Body of pancreas (tissue), 4 donors: ENCODE measurements at regions of chr9 and their contacts with region 1.

Region 1: DNA sequence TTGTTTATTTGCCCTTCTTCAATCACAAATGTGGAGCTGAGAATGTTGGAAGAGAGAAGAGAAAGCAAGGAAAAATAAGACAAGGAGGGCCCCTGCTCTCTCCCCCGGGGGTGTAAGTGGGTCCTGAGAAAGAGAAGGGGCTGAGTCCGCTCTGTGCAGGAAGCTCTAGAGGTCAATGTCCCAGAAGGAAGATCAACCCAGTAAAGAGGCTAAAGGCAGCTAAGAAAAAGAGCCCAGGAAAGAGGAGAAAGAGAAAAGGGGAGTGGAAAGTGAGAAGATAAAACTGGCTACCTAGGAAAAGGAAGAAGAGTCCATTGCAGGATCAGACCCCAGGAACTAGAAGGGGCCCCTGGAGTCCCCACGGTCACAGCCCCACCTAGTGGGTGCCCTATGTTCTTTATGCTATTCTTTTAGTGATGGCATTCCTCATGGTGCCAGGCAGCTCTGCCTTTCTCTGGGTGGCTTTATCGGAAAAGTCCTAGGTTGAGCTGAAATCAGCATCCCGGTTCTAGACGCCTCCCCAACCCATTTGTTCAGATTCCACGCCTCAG is 583.4 kb downstream of the ACTL7B start:
- DNase-seq: peak; percentile 67 to 72 (median 68)
- ATAC-seq: peak; percentile 75
- H3K4me3 ChIP-seq: peak overlapping the region in 1 of 2 donors; percentile 19
- H3K27ac ChIP-seq: peak overlapping the region in 3 of 4 donors; percentile 64 to 81 (median 67)
- H3K4me1 ChIP-seq: peaks cover 16% of the 10 kb centered on the region
- H3K27me3 ChIP-seq: no peaks in the 10 kb centered on the region
- CTCF ChIP-seq: peak; percentile 52 to 78 (median 68)
- POLR2A ChIP-seq: no peak

Region 2: GRCh38 chr9:107489687-107490605 is 782.5 kb before region 1 on chr9 and contains the start of gene KLF4:
- intact Hi-C with region 1: loop called (anchors 10 kb)
- DNase-seq: peak; percentile 91 to 93 (median 92)
- ATAC-seq: peak; percentile 89
- H3K4me3 ChIP-seq: peak within 1 kb of the TSS; percentile 24 to 31
- H3K27ac ChIP-seq: peak within 1 kb of the TSS; percentile 65 to 75 (median 69)
- H3K4me1 ChIP-seq: peaks cover 53% of the 10 kb centered on the region
- H3K27me3 ChIP-seq: no peaks in the 10 kb centered on the region
- CTCF ChIP-seq: no peak
- POLR2A ChIP-seq: peak; percentile 83 to 87 (median 85)
- total RNA-seq, gene KLF4: 12.5 to 22.7 TPM

Region 3: DNA sequence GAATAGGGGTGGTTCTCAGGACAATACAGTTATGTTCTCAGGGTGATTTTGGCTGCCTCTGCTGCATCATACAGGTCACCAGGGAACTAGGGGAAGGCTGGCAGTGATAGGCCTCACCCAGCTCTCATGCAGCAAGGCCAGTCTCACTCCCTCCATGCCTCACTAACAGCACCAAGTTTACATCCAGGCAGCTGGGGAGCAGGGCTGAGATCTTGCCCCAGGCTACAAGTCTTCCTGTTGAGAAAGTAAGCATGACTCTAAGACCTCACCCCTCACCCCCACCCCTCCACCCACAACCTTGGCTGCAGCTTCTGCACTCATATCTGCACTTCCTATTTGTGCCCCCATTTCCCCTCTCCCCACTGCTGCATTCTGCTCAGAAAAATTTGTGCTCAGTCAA is 102.2 kb after region 1 on chr9:
- intact Hi-C with region 1: no loop called
- DNase-seq: no peak
- ATAC-seq: no peak
- H3K4me3 ChIP-seq: no peak overlapping the region
- H3K27ac ChIP-seq: no peak overlapping the region
- H3K4me1 ChIP-seq: no peaks in the 10 kb centered on the region
- H3K27me3 ChIP-seq: no peaks in the 10 kb centered on the region
- CTCF ChIP-seq: no peak
- POLR2A ChIP-seq: no peak